ENCODE measurements at regions of chr3 and their contacts with region 1.

Region 1: GRCh38 chr3:71076361-71077002 is 507.0 kb downstream of the FOXP1 start:
- DNase-seq: no peak
- H3K4me3 ChIP-seq: no peak overlapping the region
- H3K27ac ChIP-seq: no peak overlapping the region
- H3K4me1 ChIP-seq: peaks cover 24% of the 10 kb centered on the region
- CTCF ChIP-seq: no peak

Region 2: DNA sequence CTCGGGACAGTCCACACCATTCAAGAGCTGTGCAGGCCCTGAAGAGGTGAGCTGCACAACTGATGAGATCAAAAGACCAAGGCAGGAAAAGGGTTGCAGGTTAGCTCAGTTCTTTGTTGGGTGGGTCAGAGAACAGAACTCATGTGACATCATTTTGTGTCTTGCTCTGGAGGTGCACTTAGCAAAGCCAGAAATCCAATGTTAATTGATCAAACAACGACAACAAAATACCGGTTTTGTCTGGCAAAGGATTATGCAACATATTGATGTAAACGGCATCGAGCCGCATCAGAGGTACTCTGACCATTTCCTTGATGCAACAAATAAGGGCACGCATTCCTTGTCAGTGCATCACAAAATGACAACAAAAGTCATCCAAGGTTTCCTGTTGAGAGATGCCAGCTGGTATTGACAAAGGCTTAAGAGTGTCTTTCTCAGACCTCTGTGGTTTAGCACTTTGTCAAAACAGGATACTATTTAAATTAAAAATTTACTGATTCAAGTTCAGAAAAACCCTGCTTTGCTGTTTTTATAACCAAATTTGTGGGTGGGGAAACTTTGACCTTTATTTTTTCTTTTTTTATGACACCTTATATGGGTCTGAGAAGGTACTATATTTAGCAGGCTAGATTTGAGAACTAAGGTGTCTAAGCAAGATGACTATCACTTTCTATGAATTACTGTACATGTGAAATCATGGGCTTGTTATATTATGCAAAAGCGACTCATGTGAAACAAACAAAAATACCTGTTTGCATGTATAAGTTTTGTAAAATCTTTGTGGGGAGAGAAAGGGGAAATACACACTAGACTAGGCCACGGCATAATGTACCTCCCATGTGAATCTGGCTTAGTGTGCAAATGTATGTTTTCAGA is 10.9 kb after region 1 on chr3:
- CTCF ChIA-PET with region 1: no interaction called
- POLR2A ChIA-PET with region 1: interaction called, 11 read pairs
- intact Hi-C with region 1: no loop called
- DNase-seq: peak; percentile 51
- H3K4me3 ChIP-seq: no peak overlapping the region
- H3K27ac ChIP-seq: peak overlapping the region; percentile 12
- H3K4me1 ChIP-seq: peaks cover 62% of the 10 kb centered on the region
- CTCF ChIP-seq: no peak